ENCODE measurements at regions of chr12 and their contacts with region 1.

Region 1: DNA sequence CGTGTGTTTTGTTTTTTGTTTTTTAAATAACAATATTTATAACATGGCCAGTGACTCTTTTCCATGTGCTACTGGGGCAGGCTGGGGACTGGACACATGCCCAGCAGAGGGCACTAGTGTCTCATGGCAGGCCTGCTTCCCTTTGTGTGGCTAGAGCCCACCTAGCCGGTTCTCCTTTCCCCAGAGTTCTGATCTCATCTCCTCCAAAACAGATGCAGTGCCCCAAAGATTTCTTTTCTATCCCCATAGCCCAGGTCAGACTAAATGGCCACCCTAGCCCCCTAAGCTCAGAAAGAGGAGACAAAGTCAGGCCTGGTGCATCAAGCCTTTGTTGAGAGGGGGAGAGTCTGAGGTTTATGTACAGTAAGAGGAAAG is 21.2 kb downstream of the PRPF40B start:
- DNase-seq: peak; percentile 49
- ATAC-seq: peak; percentile 65
- H3K4me3 ChIP-seq: no peak overlapping the region
- H3K27ac ChIP-seq: no peak overlapping the region
- H3K4me1 ChIP-seq: peaks cover 52% of the 10 kb centered on the region
- H3K27me3 ChIP-seq: no peaks in the 10 kb centered on the region; a peak in 1 of 5 replicates
- CTCF ChIP-seq: peak; percentile 88
- EP300 ChIP-seq: no peak
- POLR2A ChIP-seq: no peak
- RAD21 ChIP-seq: peak; percentile 89

Region 2: GRCh38 chr12:49440035-49440434 is 204.6 kb before region 1 on chr12:
- CTCF ChIA-PET with region 1: no interaction called
- POLR2A ChIA-PET with region 1: no interaction called
- in situ Hi-C with region 1: no loop called
- intact Hi-C with region 1: no loop called
- DNase-seq: peak; percentile 43
- ATAC-seq: no peak; the same call in 2 of the 3 replicates
- H3K4me3 ChIP-seq: no peak overlapping the region
- H3K27ac ChIP-seq: no peak overlapping the region
- H3K4me1 ChIP-seq: peaks cover 26% of the 10 kb centered on the region
- H3K27me3 ChIP-seq: no peaks in the 10 kb centered on the region
- CTCF ChIP-seq: no peak
- EP300 ChIP-seq: no peak
- POLR2A ChIP-seq: no peak
- RAD21 ChIP-seq: no peak

Region 3: GRCh38 chr12:49707128-49707811 is 62.7 kb after region 1 on chr12 and contains the start of gene FMNL3:
- CTCF ChIA-PET with region 1: interaction called, 31 read pairs
- POLR2A ChIA-PET with region 1: no interaction called
- in situ Hi-C with region 1: loop called (anchors 5 kb)
- intact Hi-C with region 1: loop called (anchors 1 kb)
- DNase-seq: peak; percentile 72
- ATAC-seq: peak; percentile 94
- H3K4me3 ChIP-seq: peak within 1 kb of the TSS; percentile 42 to 64 (median 54); a peak in 4 of 6 replicates
- H3K27ac ChIP-seq: no peak within 1 kb of the TSS
- H3K4me1 ChIP-seq: peaks cover 14% of the 10 kb centered on the region; the same call in 1 of the 2 replicates
- H3K27me3 ChIP-seq: peaks cover 0 to 14% of the 10 kb centered on the region in 2 experiments; a peak in 1 of 5 replicates
- CTCF ChIP-seq: peak; percentile 94
- EP300 ChIP-seq: no peak
- POLR2A ChIP-seq: no peak
- RAD21 ChIP-seq: peak; percentile 95
- total RNA-seq, gene FMNL3: 0.79 and 1.1 TPM in 2 replicates

Region 4: DNA sequence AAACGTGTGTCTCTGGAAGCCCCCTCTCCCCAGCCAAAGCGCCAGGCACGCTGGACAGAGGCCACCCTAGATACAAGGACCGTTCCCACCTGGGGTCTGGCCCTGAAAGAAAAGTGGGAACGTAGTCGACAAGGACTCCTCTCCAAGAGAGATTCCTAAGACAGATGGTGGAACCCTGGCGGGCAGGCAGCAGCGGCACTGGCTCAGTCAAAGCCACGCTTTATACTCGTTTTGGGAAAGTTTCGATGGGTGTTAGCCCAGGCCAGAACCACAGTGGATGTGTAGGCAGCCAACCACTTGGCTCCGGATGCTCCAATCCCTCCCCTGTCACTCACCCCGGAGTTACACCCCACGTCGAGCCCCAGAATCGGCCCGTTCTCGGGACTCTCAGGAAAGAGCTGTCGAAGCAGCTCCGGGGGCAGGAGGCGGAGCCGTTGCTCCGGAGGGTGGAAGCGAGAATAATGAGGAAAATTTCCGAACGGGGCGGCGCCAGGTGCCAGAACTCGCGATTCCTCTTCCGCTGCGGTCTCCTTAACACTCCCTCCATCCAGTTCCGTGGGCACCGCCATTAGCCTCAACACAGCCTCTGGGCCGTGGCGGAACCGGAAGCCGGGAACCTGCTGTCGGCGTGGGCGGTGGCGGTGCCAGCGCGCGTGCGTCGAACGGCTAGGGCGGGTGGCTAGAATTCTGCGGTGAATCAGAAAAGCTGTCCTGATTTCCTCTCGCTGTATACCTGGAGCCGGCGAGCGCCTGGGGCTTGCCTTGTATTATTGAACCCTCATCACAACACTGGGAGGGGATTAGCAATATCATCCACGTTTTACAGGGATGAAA is 198.1 kb after region 1 on chr12 and contains the start of gene BCDIN3D:
- CTCF ChIA-PET with region 1: no interaction called
- POLR2A ChIA-PET with region 1: no interaction called
- in situ Hi-C with region 1: no loop called
- intact Hi-C with region 1: loop called (anchors 1 kb)
- DNase-seq: peak; percentile 83
- ATAC-seq: peak; percentile 97
- H3K4me3 ChIP-seq: peak within 1 kb of the TSS; percentile 94 to 99 (median 97)
- H3K27ac ChIP-seq: peak within 1 kb of the TSS; percentile 92
- H3K4me1 ChIP-seq: peaks cover 19% of the 10 kb centered on the region
- H3K27me3 ChIP-seq: peaks cover 0 to 3% of the 10 kb centered on the region in 2 experiments; a peak in 1 of 5 replicates
- CTCF ChIP-seq: no peak
- EP300 ChIP-seq: no peak
- POLR2A ChIP-seq: peak; percentile 75 to 83
- RAD21 ChIP-seq: no peak
- total RNA-seq, gene BCDIN3D: 1.8 and 2.5 TPM in 2 replicates